OCI-LY7 (cell line): ENCODE measurements at regions of chr1 and their contacts with region 1.

Region 1: DNA sequence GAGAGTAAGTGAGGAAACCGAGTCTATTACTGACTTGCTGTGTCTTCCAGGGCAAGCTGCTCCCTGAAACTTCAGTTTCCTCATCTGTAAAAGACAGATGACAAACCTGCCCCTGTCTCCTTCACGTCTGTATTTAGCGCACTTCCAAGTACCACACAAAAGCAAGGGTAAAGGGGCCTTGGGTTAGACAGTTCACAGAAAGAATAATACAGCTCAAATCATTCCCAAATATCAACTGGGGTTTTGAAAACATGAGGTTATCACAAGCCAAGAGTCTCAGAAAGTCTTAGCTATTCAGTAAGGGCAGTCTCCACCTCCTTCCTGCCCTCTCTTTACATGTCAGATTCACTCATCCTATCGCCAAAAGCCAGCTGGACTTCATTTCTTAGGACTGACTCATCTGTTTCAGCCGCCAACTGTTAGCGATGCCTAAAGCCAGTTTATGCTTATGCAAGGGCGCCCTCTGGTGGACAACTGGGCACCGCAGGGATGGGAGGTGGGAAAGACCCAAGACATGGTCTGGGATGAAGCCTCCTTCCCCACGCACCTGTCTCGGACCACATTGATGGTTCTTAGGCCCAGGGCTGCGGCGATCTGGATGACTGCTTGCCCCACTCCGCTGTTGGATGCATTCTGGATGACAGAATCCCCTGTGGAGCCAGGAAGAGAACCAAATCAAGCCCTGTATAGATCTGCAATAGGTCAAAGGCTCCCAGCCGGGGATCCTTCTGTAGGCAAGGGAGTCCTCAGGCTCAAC is 21.1 kb upstream of the SRSF4 start:
- DNase-seq: peak; percentile 85
- H3K4me3 ChIP-seq: no peak overlapping the region
- H3K27ac ChIP-seq: no peak overlapping the region
- H3K4me1 ChIP-seq: no peaks in the 10 kb centered on the region
- CTCF ChIP-seq: peak; percentile 98

Region 2: DNA sequence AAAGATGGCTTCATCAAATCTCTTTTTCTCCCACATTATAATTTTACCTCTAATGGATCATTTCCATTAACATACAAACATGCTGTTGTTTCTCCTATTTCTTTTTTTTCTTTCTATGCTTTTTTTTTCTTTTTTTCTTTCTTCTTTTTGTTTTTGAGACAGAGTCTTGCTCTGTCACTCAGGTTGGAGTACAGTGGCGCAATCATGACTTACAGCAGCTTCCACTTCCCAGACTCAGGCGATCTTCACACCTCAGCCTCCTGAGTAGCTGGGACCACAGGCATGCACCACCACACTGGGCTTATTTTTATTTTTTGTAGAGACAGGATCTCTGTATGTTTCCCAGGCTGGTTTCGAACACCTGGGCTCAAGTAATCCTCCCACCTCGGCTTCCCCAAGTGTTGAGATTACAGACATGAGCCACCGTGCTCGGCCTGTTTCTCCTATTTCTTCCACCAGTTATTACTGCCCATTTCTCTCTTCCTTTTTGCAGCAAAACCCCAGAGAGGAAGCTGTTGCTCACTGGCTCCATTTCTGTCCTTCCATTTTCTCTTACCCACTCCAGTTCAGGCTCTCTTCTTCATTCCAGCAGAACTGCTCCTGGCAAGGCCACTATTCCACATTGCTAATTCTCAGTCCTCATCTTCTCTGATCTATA is 422.9 kb before region 1 on chr1:
- CTCF ChIA-PET with region 1: no interaction called
- POLR2A ChIA-PET with region 1: no interaction called
- intact Hi-C with region 1: loop called (anchors 10 kb)
- DNase-seq: no peak
- H3K4me3 ChIP-seq: no peak overlapping the region
- H3K27ac ChIP-seq: no peak overlapping the region
- H3K4me1 ChIP-seq: no peaks in the 10 kb centered on the region
- CTCF ChIP-seq: no peak

Region 3: GRCh38 chr1:29033829-29034466 is 168.8 kb before region 1 on chr1:
- CTCF ChIA-PET with region 1: interaction called, 4 read pairs
- POLR2A ChIA-PET with region 1: interaction called, 3 read pairs
- intact Hi-C with region 1: loop called (anchors 5 kb)
- DNase-seq: peak; percentile 64
- H3K4me3 ChIP-seq: no peak overlapping the region
- H3K27ac ChIP-seq: no peak overlapping the region
- H3K4me1 ChIP-seq: no peaks in the 10 kb centered on the region
- CTCF ChIP-seq: peak; percentile 93

Region 4: GRCh38 chr1:29077155-29077554 is 125.6 kb before region 1 on chr1:
- CTCF ChIA-PET with region 1: no interaction called
- POLR2A ChIA-PET with region 1: no interaction called
- intact Hi-C with region 1: loop called (anchors 10 kb)
- DNase-seq: no peak
- H3K4me3 ChIP-seq: no peak overlapping the region
- H3K27ac ChIP-seq: no peak overlapping the region
- H3K4me1 ChIP-seq: no peaks in the 10 kb centered on the region
- CTCF ChIP-seq: no peak

Region 5: GRCh38 chr1:29120961-29121485 is 81.7 kb before region 1 on chr1:
- CTCF ChIA-PET with region 1: no interaction called
- POLR2A ChIA-PET with region 1: no interaction called
- intact Hi-C with region 1: loop called (anchors 2 kb)
- DNase-seq: peak; percentile 76
- H3K4me3 ChIP-seq: no peak overlapping the region
- H3K27ac ChIP-seq: no peak overlapping the region
- H3K4me1 ChIP-seq: no peaks in the 10 kb centered on the region
- CTCF ChIP-seq: peak; percentile 86